Activated naive CD4-positive, alpha-beta T cell treated with anti-CD3 and anti-CD28 coated beads for 36 hours (primary cell): ENCODE measurements at regions of chr12 and their contacts with region 1.

Region 1: GRCh38 chr12:56468216-56469006 is at the start of gene SPRYD4:
- DNase-seq: peak; percentile 95
- H3K4me3 Mint-ChIP-seq: peak within 1 kb of the TSS; percentile 96
- H3K27ac Mint-ChIP-seq: peak within 1 kb of the TSS; percentile 97
- H3K4me1 Mint-ChIP-seq: peaks cover 32% of the 10 kb centered on the region
- H3K27me3 Mint-ChIP-seq: no peaks in the 10 kb centered on the region
- total RNA-seq, gene SPRYD4: 2.2 TPM

Region 2: GRCh38 chr12:55973598-55974307 is 494.7 kb before region 1 on chr12 and contains the start of gene RAB5B:
- CTCF ChIA-PET with region 1: no interaction called
- intact Hi-C with region 1: no loop called
- DNase-seq: peak; percentile 99
- H3K4me3 Mint-ChIP-seq: no peak within 1 kb of the TSS
- H3K27ac Mint-ChIP-seq: no peak within 1 kb of the TSS
- H3K4me1 Mint-ChIP-seq: peaks cover 24% of the 10 kb centered on the region
- H3K27me3 Mint-ChIP-seq: no peaks in the 10 kb centered on the region
- total RNA-seq, gene RAB5B: 33.2 to 35.7 TPM

Region 3: GRCh38 chr12:56041552-56042429 is 426.6 kb before region 1 on chr12 and contains the start of gene RPS26:
- CTCF ChIA-PET with region 1: no interaction called
- intact Hi-C with region 1: loop called (anchors 2 kb)
- DNase-seq: peak; percentile 96
- H3K4me3 Mint-ChIP-seq: peak within 1 kb of the TSS; percentile 96
- H3K27ac Mint-ChIP-seq: peak within 1 kb of the TSS; percentile 98
- H3K4me1 Mint-ChIP-seq: peaks cover 57% of the 10 kb centered on the region
- H3K27me3 Mint-ChIP-seq: no peaks in the 10 kb centered on the region
- total RNA-seq, gene RPS26: 31.0 to 37.3 TPM

Region 4: DNA sequence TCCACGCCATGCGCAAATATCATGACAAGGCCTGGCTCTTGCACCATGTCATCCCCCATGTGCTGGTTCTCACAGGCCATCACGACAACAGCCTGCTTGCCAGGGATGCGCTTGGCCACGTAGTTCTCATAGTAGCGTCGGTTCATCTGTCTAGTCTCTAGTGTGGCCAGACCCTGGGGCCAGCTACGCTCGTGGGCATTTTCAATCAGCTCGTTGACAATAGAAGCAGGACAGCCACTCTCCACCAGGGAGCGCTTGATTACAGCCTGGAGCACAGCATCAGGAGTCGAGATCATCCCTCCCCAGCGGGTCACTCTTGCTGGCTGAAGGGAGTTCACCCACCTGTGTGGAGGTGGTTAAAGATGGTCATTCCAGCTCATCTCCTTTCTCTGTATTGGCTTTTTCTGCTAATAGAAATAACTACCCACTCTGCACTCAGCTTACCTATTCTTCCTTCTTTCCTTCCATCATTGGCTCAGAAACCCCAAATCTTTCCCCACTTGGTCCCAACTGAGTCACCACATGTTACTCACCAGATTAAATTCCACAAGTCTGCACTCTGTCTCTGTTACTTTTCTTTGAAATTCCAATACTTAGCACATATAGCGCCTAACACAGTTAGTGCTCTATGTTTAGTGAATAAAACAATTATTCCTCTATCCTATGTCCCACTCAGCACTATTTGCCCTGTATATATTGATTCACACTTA is 261.8 kb before region 1 on chr12:
- CTCF ChIA-PET with region 1: interaction called, 3 read pairs
- intact Hi-C with region 1: loop called (anchors 1 kb)
- DNase-seq: peak; percentile 67
- H3K4me3 Mint-ChIP-seq: no peak overlapping the region
- H3K27ac Mint-ChIP-seq: no peak overlapping the region
- H3K4me1 Mint-ChIP-seq: peaks cover 2% of the 10 kb centered on the region
- H3K27me3 Mint-ChIP-seq: no peaks in the 10 kb centered on the region

Region 5: GRCh38 chr12:56266693-56267442 is 201.5 kb before region 1 on chr12 and contains the start of gene COQ10A:
- CTCF ChIA-PET with region 1: interaction called, 11 read pairs
- intact Hi-C with region 1: loop called (anchors 1 kb)
- DNase-seq: peak; percentile 90
- H3K4me3 Mint-ChIP-seq: peak within 1 kb of the TSS; percentile 89
- H3K27ac Mint-ChIP-seq: peak within 1 kb of the TSS; percentile 81
- H3K4me1 Mint-ChIP-seq: peaks cover 16% of the 10 kb centered on the region
- H3K27me3 Mint-ChIP-seq: no peaks in the 10 kb centered on the region
- total RNA-seq, gene COQ10A: 3.5 to 6.1 TPM

Region 6: GRCh38 chr12:56315622-56316473 is 152.6 kb before region 1 on chr12 and contains the start of gene CNPY2:
- CTCF ChIA-PET with region 1: interaction called, 20 read pairs
- intact Hi-C with region 1: loop called (anchors 1 kb)
- DNase-seq: peak; percentile 92
- H3K4me3 Mint-ChIP-seq: peak within 1 kb of the TSS; percentile 97
- H3K27ac Mint-ChIP-seq: peak within 1 kb of the TSS; percentile 97
- H3K4me1 Mint-ChIP-seq: peaks cover 16% of the 10 kb centered on the region
- H3K27me3 Mint-ChIP-seq: no peaks in the 10 kb centered on the region
- total RNA-seq, gene CNPY2: 47.5 to 57.3 TPM

Region 7: DNA sequence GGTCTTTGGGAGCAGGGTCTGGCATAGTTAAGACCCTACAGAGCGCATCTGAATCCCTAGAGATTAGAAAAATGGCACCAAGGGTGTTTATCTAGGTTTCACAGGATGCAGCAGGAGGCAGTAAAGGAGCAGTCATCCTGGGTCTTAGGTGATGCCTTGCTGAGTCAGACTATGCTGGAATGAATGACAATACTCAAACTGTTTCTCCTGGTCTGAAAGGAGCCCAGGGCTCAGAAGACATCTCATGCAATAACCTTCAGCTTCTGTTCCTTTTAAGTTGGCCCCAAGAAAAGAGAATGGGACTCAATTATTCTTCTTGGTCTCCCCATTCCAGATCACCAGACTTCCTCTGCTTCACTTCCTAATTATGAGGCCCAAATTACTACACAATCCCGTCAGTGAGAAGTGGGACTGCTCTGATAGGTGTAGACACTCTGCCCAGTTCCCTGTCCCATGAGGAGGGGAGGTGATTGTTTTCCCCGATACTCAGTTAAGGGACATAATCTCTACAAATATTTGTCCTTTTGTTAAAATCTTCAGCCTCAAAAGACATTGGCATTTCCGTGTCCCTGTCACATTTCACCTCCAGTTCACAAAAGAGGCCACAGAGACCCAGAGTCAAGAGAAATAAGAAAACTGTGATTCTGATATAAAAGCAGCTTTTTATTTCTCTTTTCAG is 91.0 kb before region 1 on chr12:
- CTCF ChIA-PET with region 1: interaction called, 6 read pairs
- intact Hi-C with region 1: loop called (anchors 1 kb)
- DNase-seq: peak; percentile 39
- H3K4me3 Mint-ChIP-seq: no peak overlapping the region
- H3K27ac Mint-ChIP-seq: no peak overlapping the region
- H3K4me1 Mint-ChIP-seq: no peaks in the 10 kb centered on the region
- H3K27me3 Mint-ChIP-seq: no peaks in the 10 kb centered on the region

Region 8: DNA sequence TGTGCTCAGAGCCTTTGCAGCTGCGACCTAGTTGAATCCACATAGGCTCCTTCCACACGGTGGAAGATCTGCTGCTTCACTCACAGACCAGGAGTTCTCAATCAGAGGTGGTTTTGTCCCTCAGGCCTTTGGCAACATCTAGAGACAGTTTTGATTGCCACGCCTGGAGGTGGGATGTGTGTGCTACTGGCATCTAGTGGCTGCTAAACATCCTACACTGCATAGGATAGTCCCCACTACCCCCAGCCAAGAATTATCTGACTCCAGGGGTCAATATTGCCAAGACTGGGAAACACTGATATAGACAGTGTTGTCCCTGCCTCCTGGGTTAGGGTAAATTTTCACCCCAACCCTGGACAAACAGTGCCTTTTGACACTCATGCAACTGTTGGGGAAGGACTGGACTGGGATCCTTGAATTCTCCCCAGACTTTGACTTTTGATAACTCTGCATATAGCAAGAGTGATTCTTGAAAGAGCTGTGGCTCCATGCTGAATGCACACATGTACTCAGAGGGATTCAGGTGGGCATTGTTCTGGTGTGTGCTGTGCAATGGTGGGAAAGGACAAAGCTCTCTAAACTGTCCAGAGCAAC is 121.9 kb after region 1 on chr12:
- CTCF ChIA-PET with region 1: no interaction called
- intact Hi-C with region 1: no loop called
- DNase-seq: peak; percentile 37
- H3K4me3 Mint-ChIP-seq: no peak overlapping the region
- H3K27ac Mint-ChIP-seq: no peak overlapping the region
- H3K4me1 Mint-ChIP-seq: no peaks in the 10 kb centered on the region
- H3K27me3 Mint-ChIP-seq: no peaks in the 10 kb centered on the region